ENCODE measurements at regions of chr2 and their contacts with region 1.

Region 1: GRCh38 chr2:196639180-196640030 is at the start of gene CCDC150:
- DNase-seq: peak; percentile 88 to 96 (median 92)
- ATAC-seq: peak; percentile 100
- H3K4me3 ChIP-seq: peak within 1 kb of the TSS; percentile 68
- H3K4me3 Mint-ChIP-seq: peak within 1 kb of the TSS; percentile 91
- H3K27ac ChIP-seq: no peak within 1 kb of the TSS
- H3K27ac Mint-ChIP-seq: peak within 1 kb of the TSS; percentile 40
- H3K4me1 ChIP-seq: peaks cover 12% of the 10 kb centered on the region
- H3K4me1 Mint-ChIP-seq: peaks cover 17% of the 10 kb centered on the region
- H3K27me3 ChIP-seq: no peaks in the 10 kb centered on the region
- H3K27me3 Mint-ChIP-seq: no peaks in the 10 kb centered on the region
- CTCF ChIP-seq: no peak
- total RNA-seq, gene CCDC150: 0.22 to 0.75 TPM

Region 2: DNA sequence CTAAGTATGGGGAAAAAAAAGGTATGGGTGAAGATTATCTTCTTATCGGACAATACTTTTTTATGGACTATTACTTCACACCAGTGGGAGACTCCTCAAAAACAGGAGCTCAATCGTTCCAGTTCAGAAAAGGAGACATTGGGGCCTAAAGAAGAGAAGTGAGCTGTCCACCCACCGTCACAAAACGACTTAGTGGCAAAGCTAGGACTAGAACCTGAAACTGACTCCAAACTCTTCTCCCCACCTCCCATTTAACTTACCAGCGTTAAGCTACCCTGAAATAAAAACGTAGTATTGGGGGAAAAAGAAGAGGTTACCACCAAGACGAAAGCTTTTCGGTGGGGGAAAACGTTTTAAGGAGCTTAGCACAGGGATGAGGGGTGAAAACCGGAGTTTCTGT is 159.6 kb after region 1 on chr2:
- CTCF ChIA-PET with region 1: interaction called, 3 read pairs
- POLR2A ChIA-PET with region 1: interaction called, 7 read pairs
- intact Hi-C with region 1: loop called in 1 of 2 experiments (anchors 2 kb)
- DNase-seq: no peak
- ATAC-seq: no peak
- H3K4me3 ChIP-seq: peak overlapping the region; percentile 92
- H3K4me3 Mint-ChIP-seq: peak overlapping the region; percentile 99
- H3K27ac ChIP-seq: peak overlapping the region in 1 of 2 donors; percentile 72
- H3K27ac Mint-ChIP-seq: peak overlapping the region; percentile 84
- H3K4me1 ChIP-seq: peaks cover 24% of the 10 kb centered on the region
- H3K4me1 Mint-ChIP-seq: peaks cover 36% of the 10 kb centered on the region
- H3K27me3 ChIP-seq: peaks cover 0 to 5% of the 10 kb centered on the region in 2 experiments
- H3K27me3 Mint-ChIP-seq: peaks cover 8% of the 10 kb centered on the region
- CTCF ChIP-seq: no peak